ENCODE measurements at regions of chr12 and their contacts with region 1.

Region 1: GRCh38 chr12:52884526-52885293 is 20.2 kb downstream of the KRT8 start:
- DNase-seq: peak; percentile 84
- H3K4me3 Mint-ChIP-seq: no peak overlapping the region
- H3K27ac Mint-ChIP-seq: no peak overlapping the region
- H3K4me1 Mint-ChIP-seq: peaks cover 7% of the 10 kb centered on the region
- H3K27me3 Mint-ChIP-seq: peaks cover 46% of the 10 kb centered on the region

Region 2: GRCh38 chr12:52582971-52583456 is 301.7 kb before region 1 on chr12:
- CTCF ChIA-PET with region 1: interaction called, 162 read pairs
- DNase-seq: peak; percentile 81
- H3K4me3 Mint-ChIP-seq: no peak overlapping the region
- H3K27ac Mint-ChIP-seq: no peak overlapping the region
- H3K4me1 Mint-ChIP-seq: peaks cover 42% of the 10 kb centered on the region
- H3K27me3 Mint-ChIP-seq: peaks cover 34% of the 10 kb centered on the region

Region 3: GRCh38 chr12:52870351-52871290 is 14.1 kb before region 1 on chr12:
- CTCF ChIA-PET with region 1: interaction called, 51 read pairs
- DNase-seq: peak; percentile 83
- H3K4me3 Mint-ChIP-seq: no peak overlapping the region
- H3K27ac Mint-ChIP-seq: no peak overlapping the region
- H3K4me1 Mint-ChIP-seq: peaks cover 36% of the 10 kb centered on the region
- H3K27me3 Mint-ChIP-seq: peaks cover 44% of the 10 kb centered on the region

Region 4: GRCh38 chr12:52895061-52895887 is 10.6 kb after region 1 on chr12:
- CTCF ChIA-PET with region 1: interaction called, 44 read pairs
- DNase-seq: no peak
- H3K4me3 Mint-ChIP-seq: no peak overlapping the region
- H3K27ac Mint-ChIP-seq: no peak overlapping the region
- H3K4me1 Mint-ChIP-seq: no peaks in the 10 kb centered on the region
- H3K27me3 Mint-ChIP-seq: peaks cover 10% of the 10 kb centered on the region

Region 5: GRCh38 chr12:52949413-52950331 is 65.0 kb after region 1 on chr12:
- CTCF ChIA-PET with region 1: interaction called, 19 read pairs
- DNase-seq: no peak
- H3K4me3 Mint-ChIP-seq: peak overlapping the region; percentile 68
- H3K27ac Mint-ChIP-seq: no peak overlapping the region
- H3K4me1 Mint-ChIP-seq: peaks cover 8% of the 10 kb centered on the region
- H3K27me3 Mint-ChIP-seq: peaks cover 42% of the 10 kb centered on the region

Region 6: GRCh38 chr12:52956987-52957386 is 72.3 kb after region 1 on chr12:
- CTCF ChIA-PET with region 1: interaction called, 21 read pairs
- DNase-seq: no peak
- H3K4me3 Mint-ChIP-seq: no peak overlapping the region
- H3K27ac Mint-ChIP-seq: no peak overlapping the region
- H3K4me1 Mint-ChIP-seq: no peaks in the 10 kb centered on the region
- H3K27me3 Mint-ChIP-seq: peaks cover 7% of the 10 kb centered on the region

Region 7: GRCh38 chr12:52969828-52970569 is 85.3 kb after region 1 on chr12:
- CTCF ChIA-PET with region 1: interaction called, 12 read pairs
- DNase-seq: no peak
- H3K4me3 Mint-ChIP-seq: no peak overlapping the region
- H3K27ac Mint-ChIP-seq: no peak overlapping the region
- H3K4me1 Mint-ChIP-seq: no peaks in the 10 kb centered on the region
- H3K27me3 Mint-ChIP-seq: peaks cover 44% of the 10 kb centered on the region

Region 8: DNA sequence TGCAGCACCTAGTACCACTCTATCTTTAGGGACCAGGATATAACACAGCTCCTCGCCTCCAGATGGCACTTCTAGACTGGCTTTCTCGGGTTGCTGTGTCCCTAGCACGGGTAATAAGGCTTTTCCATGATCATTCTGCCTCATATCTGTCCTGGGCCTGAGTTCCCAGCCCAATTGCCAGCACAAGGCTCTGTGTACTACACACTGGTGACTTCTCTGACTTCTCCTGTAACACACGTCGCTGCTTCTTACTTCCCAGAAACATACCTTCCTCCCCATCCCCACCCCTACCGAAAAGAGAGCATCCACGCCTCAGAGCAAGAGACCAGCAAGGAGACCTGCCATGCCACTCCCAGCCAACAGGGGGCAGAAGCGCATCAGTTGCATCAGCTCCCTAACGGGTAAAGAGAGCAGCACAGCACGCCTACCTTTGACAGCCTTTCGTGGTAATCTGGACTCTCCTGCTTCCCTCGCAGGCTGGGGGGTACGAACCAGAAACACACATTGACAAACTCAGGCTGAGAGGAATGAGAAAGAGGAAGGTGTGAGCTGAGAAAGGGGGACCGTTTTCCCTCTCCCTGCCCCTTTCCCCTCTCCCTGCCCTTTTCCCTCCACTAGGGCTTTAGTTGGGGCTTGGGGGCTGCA is 274.6 kb after region 1 on chr12:
- CTCF ChIA-PET with region 1: no interaction called
- DNase-seq: peak; percentile 94
- H3K4me3 Mint-ChIP-seq: no peak overlapping the region
- H3K27ac Mint-ChIP-seq: peak overlapping the region; percentile 15
- H3K4me1 Mint-ChIP-seq: peaks cover 10% of the 10 kb centered on the region
- H3K27me3 Mint-ChIP-seq: no peaks in the 10 kb centered on the region

Region 9: GRCh38 chr12:53626702-53627169 is 742.0 kb after region 1 on chr12:
- CTCF ChIA-PET with region 1: no interaction called
- DNase-seq: no peak
- H3K4me3 Mint-ChIP-seq: peak overlapping the region; percentile 97
- H3K27ac Mint-ChIP-seq: peak overlapping the region; percentile 92
- H3K4me1 Mint-ChIP-seq: peaks cover 40% of the 10 kb centered on the region
- H3K27me3 Mint-ChIP-seq: peaks cover 10% of the 10 kb centered on the region